ENCODE measurements at regions of chr9 and their contacts with region 1.

Region 1: GRCh38 chr9:133144137-133144903 is 19.4 kb downstream of the GBGT1 start:
- H3K4me3 Mint-ChIP-seq: peak overlapping the region; percentile 80
- H3K27ac Mint-ChIP-seq: peak overlapping the region; percentile 84
- H3K4me1 Mint-ChIP-seq: peaks cover 89% of the 10 kb centered on the region
- H3K27me3 Mint-ChIP-seq: no peaks in the 10 kb centered on the region

Region 2: DNA sequence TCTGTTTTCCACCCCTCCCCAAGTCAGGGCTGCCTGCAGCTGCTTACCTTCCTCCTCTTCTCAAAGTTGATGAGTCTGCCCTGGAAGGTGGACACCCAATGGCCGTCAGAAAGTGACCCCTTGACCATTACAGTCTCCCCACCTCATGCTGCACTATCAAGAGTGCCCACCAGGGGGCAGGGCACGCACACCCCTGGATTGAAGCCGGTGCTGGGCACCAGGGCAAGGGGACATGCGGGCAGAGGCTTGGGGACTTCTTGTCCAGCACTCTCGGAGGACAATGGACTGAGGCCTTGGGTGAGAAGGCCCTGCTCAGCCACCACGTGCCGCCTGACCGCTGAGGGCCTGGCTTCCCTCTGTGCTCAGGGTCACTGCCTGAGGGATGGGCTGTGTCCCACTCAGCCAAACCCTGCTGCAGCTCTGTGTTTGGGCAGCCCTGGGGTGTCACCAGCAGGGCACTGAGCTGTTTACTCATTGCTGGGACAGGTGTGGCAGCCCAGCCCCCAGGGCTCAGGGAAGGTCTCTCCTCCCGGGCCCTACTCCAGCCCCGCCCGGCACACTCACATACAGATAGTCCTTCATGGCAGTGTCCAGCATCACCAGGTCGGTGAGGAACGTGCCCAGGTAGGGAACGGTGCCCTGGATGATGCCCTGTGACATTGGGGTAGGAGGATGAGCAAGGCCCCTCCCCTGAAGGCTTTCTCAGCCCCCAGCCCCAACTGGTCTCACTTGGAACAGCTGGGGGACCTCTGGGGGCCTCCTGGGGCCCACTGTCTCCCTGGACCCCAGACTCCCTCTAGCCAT is 40.9 kb before region 1 on chr9:
- intact Hi-C with region 1: loop called (anchors 1 kb)
- H3K4me3 Mint-ChIP-seq: no peak overlapping the region
- H3K27ac Mint-ChIP-seq: peak overlapping the region; percentile 68
- H3K4me1 Mint-ChIP-seq: no peaks in the 10 kb centered on the region
- H3K27me3 Mint-ChIP-seq: no peaks in the 10 kb centered on the region